Aorta (tissue), 5 donors: ENCODE measurements at regions of chr2 and their contacts with region 1.

Region 1: DNA sequence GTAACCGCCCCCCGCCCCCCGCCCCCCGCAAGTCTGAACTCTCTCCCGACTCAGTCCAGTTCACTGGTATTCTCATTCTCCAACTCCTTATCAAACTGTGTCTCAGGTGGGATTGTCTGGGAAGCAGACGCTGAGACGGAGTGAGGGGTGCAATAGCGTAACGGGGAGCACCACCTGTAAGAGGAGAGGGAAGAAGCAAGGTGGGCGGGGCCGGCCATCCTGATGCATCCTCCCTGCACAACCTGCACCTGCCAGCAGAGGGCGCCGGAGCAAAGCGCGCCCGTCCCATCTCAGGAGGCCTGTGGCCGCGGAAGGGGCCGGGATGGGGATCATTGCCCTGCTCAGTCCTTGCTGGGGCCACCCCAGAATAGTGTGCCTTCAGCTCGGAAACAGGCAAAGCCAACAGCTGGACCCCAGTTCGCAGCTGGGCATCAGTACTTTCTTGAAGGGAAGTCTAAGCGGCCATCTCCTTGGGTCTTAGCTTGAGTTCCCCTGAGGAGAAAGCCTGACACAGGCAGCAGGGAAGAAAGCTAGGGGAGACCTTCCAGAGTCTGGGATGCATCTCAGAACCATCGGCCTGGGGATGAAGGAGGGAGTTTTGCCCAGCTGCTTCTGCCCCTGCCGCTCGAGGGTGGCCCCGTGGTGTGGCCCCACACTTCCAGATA is 208.0 kb downstream of the TFCP2L1 start:
- DNase-seq: peak; percentile 62 to 89
- ATAC-seq: peak; percentile 54
- H3K4me3 ChIP-seq: no peak overlapping the region
- H3K27ac ChIP-seq: no peak overlapping the region
- H3K4me1 ChIP-seq: no peaks in the 10 kb centered on the region
- H3K27me3 ChIP-seq: peaks cover 0 to 3% of the 10 kb centered on the region in 2 donors

Region 2: DNA sequence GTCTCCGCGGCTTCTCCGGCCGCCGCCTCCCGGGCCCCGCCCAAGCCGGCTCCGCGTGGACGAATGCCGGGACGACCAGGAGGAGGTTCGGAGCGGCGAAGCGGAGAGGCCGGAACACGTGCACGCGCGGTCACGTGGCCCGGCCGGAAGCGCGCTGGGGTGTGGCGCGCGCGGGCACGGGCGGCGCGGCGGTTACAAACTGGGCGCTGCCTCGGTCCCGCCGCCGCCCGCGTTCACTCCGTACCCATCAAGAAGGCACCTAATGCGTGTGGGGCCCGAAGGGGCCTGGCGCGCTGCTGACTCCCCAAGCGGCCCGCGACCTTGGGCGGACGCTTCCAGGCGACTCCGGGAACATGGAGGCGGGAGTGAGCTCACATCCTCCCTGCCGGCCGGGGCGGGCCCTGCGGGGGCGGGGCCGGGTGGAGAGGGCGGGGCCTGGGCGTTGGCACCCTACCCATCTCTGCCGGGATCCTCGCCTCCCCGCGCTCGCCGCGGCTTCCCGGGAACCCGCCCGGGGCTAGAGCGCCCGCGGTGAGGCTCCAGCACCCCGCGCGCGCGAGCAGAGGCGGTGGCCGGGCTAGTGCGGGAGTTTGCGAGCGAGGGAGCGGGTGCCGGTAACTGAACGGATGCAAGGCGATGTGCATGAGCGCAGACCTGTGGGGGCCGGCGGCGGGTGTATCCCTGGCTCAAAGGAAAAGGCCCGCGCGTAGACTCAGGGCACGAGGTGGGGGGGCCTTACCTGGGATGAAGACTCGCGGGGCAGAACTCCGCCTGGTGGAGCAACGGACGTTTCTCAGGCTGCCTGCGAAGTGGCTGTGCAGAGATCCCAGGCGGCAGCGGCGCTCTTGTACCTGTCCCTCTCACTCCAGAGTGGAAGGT is 853.7 kb before region 1 on chr2 and contains the start of gene TMEM185B:
- intact Hi-C with region 1: no loop called
- DNase-seq: peak; percentile 92 to 97
- ATAC-seq: peak; percentile 97
- H3K4me3 ChIP-seq: peak within 1 kb of the TSS; percentile 46 to 65
- H3K27ac ChIP-seq: peak within 1 kb of the TSS in 1 of 2 donors; percentile 20
- H3K4me1 ChIP-seq: no peaks in the 10 kb centered on the region
- H3K27me3 ChIP-seq: no peaks in the 10 kb centered on the region
- total RNA-seq, gene TMEM185B: 17.5 to 20.8 TPM

Region 3: GRCh38 chr2:120693121-120693520 is 383.9 kb before region 1 on chr2:
- intact Hi-C with region 1: loop called (anchors 1 to 2 kb)
- DNase-seq: no peak
- ATAC-seq: no peak
- H3K4me3 ChIP-seq: no peak overlapping the region
- H3K27ac ChIP-seq: no peak overlapping the region
- H3K4me1 ChIP-seq: no peaks in the 10 kb centered on the region
- H3K27me3 ChIP-seq: no peaks in the 10 kb centered on the region

Region 4: GRCh38 chr2:120856421-120856862 is 220.6 kb before region 1 on chr2:
- intact Hi-C with region 1: loop called in 1 of 2 experiments (anchors 10 kb)
- DNase-seq: peak; percentile 47 to 75
- ATAC-seq: no peak
- H3K4me3 ChIP-seq: no peak overlapping the region
- H3K27ac ChIP-seq: no peak overlapping the region
- H3K4me1 ChIP-seq: no peaks in the 10 kb centered on the region
- H3K27me3 ChIP-seq: no peaks in the 10 kb centered on the region

Region 5: GRCh38 chr2:121031568-121032340 is 45.3 kb before region 1 on chr2:
- intact Hi-C with region 1: no loop called
- DNase-seq: no peak
- ATAC-seq: peak; percentile 22
- H3K4me3 ChIP-seq: no peak overlapping the region
- H3K27ac ChIP-seq: no peak overlapping the region
- H3K4me1 ChIP-seq: no peaks in the 10 kb centered on the region
- H3K27me3 ChIP-seq: no peaks in the 10 kb centered on the region